PC-9 (cell line): ENCODE measurements at regions of chr1 and their contacts with region 1.

Region 1: GRCh38 chr1:43383449-43383848 is 6.2 kb downstream of the MED8 start:
- DNase-seq: peak in 1 of 2 experiments; percentile 33
- H3K4me3 ChIP-seq: no peak overlapping the region
- H3K27ac ChIP-seq: no peak overlapping the region
- H3K4me1 ChIP-seq: peaks cover 12% of the 10 kb centered on the region
- H3K27me3 ChIP-seq: no peaks in the 10 kb centered on the region
- CTCF ChIP-seq: peak; percentile 55; the same call in 1 of the 2 replicates

Region 2: DNA sequence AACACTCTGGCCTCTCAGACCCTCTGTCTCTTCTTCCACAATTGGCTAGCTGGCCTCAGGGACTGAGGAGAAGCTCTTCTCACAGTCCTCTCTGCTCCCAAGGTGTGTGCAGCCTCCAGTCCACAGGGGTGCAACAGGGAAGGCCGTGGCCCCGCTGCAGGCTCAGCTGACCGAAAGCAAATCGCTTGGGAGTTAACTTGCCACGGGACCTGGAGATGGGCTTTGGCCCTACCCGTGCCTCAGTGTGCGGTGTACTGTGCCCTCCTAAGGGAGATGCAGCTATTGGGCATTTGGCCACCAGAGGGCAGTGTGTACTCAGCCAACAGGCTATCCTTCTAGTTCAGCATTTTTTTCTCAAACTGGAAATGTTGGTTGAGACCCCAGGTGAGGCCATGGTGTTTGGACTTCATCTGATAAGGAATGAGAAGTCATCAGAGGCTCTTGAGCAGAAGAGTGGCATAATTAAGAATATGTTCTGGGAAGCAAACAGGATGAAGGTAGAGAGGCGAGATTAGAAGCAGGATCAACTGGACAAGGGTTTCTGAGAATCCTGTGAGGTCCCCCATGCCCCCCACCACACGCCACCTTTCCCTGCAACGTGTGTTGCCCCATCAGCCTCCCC is 156.2 kb before region 1 on chr1:
- CTCF ChIA-PET with region 1: interaction called, 5 read pairs
- POLR2A ChIA-PET with region 1: interaction called, 3 read pairs
- intact Hi-C with region 1: loop called (anchors 1 kb)
- DNase-seq: peak; percentile 73 to 88
- H3K4me3 ChIP-seq: no peak overlapping the region
- H3K27ac ChIP-seq: no peak overlapping the region
- H3K4me1 ChIP-seq: peaks cover 16% of the 10 kb centered on the region
- H3K27me3 ChIP-seq: no peaks in the 10 kb centered on the region
- CTCF ChIP-seq: peak; percentile 97

Region 3: GRCh38 chr1:43414634-43415223 is 31.3 kb after region 1 on chr1:
- CTCF ChIA-PET with region 1: no interaction called
- POLR2A ChIA-PET with region 1: no interaction called
- intact Hi-C with region 1: no loop called
- DNase-seq: peak; percentile 44 to 65
- H3K4me3 ChIP-seq: no peak overlapping the region
- H3K27ac ChIP-seq: no peak overlapping the region
- H3K4me1 ChIP-seq: no peaks in the 10 kb centered on the region
- H3K27me3 ChIP-seq: no peaks in the 10 kb centered on the region
- CTCF ChIP-seq: peak; percentile 80